ENCODE measurements at regions of chr12 and their contacts with region 1.

Region 1: GRCh38 chr12:4037747-4038312 is 164.6 kb upstream of the PARP11 start:
- DNase-seq: no peak
- H3K4me3 ChIP-seq: no peak overlapping the region
- H3K27ac ChIP-seq: no peak overlapping the region
- H3K4me1 ChIP-seq: no peaks in the 10 kb centered on the region
- H3K27me3 ChIP-seq: peaks cover 17% of the 10 kb centered on the region
- CTCF ChIP-seq: peak; percentile 79

Region 2: DNA sequence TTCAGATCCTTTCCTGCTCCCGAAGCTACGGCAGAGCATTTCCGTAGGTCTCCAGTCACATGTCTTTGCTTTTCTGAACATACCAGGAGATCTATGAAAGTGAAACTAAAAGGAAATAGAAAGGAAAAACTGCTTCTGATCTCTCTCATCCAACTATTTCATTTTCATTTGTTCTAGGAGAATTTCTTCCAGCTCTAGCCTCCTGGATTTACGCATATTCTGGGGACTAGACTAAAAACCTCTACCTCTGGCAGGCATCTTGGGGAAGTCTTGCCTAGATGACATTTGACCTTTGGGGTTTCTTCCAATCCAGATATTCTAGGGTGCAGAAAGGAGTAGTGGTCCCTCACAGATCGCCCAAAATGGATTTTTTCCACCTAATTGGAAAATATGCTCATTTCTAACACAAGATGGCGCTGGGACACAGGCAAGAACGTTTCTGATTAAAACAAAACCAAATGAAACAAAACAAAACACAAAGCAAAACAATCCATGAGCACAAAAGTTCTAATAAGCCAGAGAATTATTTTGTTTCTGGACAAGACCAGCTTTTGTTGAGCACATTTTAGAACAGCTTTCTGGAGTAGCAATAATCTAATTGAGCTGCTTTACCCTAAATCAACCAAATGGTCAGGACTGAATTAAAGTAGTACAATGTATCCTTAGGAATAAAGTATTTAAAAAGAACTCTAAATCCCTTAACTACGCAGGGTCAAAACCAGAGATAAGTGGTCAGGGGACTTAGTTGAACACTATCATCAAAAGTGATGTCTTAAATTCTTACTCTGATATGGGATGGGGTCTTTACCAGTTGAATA is 152.3 kb before region 1 on chr12:
- intact Hi-C with region 1: loop called (anchors 5 kb)
- DNase-seq: no peak
- H3K4me3 ChIP-seq: peak overlapping the region; percentile 56
- H3K27ac ChIP-seq: peak overlapping the region; percentile 76
- H3K4me1 ChIP-seq: peaks cover 9% of the 10 kb centered on the region
- H3K27me3 ChIP-seq: peaks cover 15% of the 10 kb centered on the region
- CTCF ChIP-seq: peak; percentile 84

Measured in left ventricle myocardium inferior (tissue), 1 donor.